ENCODE measurements at regions of chr1 and their contacts with region 1.

Region 1: DNA sequence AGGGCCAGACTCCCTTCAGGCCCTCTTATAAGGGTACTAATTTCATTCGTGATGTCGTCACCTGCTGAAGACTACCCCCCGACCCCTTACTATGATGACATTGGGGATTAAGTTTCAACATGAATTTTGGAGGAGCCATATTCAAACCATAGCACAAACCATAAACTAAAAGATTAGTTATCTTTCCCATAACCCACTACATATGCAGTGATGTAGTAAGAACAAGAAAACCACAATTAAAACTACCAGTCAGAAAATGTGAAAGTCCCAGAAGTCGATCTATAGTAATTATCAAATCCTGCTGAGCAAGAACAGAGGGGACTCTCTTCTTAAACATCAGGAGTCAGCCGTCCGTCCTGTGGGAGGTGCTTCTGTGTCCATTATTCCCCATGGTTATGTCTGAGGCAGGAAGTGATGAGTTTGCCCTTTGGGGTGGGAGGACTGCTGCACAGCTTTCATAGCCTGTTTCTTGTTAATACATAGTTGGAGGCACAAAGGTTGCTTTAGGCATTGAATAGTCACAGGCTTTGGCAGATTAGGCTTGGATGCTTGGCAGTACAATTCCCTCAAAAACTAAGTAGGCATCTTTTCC is 35.9 kb upstream of the PTGFRN start:
- DNase-seq: peak; percentile 68
- H3K4me3 Mint-ChIP-seq: no peak overlapping the region
- H3K27ac Mint-ChIP-seq: peak overlapping the region; percentile 22
- H3K4me1 Mint-ChIP-seq: peaks cover 19% of the 10 kb centered on the region
- H3K27me3 Mint-ChIP-seq: no peaks in the 10 kb centered on the region

Region 2: DNA sequence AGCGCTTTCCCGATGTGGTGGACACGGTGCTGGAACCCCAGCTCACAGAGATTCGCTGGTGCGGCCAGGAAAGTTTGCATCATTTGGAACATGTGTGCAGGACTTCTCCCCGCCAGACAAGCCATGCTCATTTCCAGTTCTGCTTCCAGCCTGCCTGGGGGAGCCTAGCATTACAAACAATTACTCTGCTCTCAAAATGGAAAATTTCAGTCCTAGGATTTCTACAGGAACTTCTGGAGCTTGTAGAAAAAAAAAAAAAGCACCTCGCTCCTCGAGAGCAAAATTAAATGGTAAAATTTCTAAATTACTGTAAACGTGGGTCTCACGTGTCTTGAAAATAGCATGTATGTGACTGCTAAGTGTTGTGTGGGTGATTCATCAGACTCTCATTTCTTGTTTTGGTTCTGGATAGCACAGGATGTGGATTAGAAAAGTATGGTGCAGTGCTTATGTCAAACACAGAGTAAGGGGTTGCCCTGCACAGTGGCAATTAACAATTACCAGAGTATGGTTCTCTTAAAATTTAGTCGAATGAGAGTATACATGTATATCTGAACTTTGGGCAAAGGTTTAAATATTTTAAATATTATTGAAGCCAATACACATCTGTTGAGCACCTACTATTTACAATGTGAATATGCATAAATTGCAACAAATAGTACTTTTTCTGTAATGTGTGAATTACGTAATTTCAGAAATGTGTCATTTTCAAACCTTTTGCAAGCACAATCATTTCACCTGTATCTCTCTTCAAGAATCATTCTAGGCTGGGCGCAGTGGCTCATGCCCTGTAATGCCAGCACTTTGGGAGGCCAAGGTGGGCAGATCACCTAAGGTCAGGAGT is 25.9 kb before region 1 on chr1:
- intact Hi-C with region 1: loop called (anchors 1 kb)
- DNase-seq: peak; percentile 71
- H3K4me3 Mint-ChIP-seq: peak overlapping the region; percentile 44
- H3K27ac Mint-ChIP-seq: peak overlapping the region; percentile 61
- H3K4me1 Mint-ChIP-seq: peaks cover 23% of the 10 kb centered on the region
- H3K27me3 Mint-ChIP-seq: no peaks in the 10 kb centered on the region

Region 3: DNA sequence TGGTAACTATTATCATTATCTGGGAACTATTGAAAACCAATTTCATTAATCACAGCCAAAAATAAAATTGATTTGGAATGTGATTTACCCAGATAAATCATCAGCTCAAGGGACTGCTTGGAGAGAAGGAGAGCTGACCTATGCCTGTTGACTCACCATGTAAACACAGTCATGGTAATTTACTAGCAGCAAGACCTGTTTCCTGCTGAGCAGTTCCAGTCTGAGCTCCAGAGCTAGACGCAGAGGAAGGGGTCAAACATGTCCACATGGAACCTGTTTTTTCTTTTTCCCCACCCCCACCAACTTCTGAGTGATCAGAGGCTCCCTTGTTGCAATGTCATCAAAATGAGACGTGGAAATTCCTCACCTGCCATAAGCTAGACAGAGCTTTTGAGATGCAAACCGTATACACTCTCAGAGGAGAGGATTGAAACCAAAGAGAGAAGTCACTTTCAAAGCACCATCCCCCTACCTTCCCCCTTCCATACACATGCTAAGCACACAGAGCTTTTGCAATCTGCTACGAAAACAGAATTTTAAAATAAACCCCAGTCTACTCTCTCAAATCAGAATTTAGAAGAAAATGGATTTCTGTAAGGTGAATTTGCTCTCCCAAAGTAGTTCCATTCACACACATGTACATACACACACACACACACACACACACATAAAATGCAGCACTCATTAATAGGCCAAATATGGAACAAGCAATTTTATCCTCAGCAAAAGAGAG is 19.9 kb before region 1 on chr1:
- intact Hi-C with region 1: loop called (anchors 1 kb)
- DNase-seq: no peak
- H3K4me3 Mint-ChIP-seq: peak overlapping the region; percentile 21
- H3K27ac Mint-ChIP-seq: peak overlapping the region; percentile 65
- H3K4me1 Mint-ChIP-seq: peaks cover 21% of the 10 kb centered on the region
- H3K27me3 Mint-ChIP-seq: no peaks in the 10 kb centered on the region

Region 4: GRCh38 chr1:116886291-116886878 is 12.6 kb after region 1 on chr1:
- intact Hi-C with region 1: no loop called
- DNase-seq: no peak
- H3K4me3 Mint-ChIP-seq: no peak overlapping the region
- H3K27ac Mint-ChIP-seq: no peak overlapping the region
- H3K4me1 Mint-ChIP-seq: peaks cover 28% of the 10 kb centered on the region
- H3K27me3 Mint-ChIP-seq: no peaks in the 10 kb centered on the region

Region 5: DNA sequence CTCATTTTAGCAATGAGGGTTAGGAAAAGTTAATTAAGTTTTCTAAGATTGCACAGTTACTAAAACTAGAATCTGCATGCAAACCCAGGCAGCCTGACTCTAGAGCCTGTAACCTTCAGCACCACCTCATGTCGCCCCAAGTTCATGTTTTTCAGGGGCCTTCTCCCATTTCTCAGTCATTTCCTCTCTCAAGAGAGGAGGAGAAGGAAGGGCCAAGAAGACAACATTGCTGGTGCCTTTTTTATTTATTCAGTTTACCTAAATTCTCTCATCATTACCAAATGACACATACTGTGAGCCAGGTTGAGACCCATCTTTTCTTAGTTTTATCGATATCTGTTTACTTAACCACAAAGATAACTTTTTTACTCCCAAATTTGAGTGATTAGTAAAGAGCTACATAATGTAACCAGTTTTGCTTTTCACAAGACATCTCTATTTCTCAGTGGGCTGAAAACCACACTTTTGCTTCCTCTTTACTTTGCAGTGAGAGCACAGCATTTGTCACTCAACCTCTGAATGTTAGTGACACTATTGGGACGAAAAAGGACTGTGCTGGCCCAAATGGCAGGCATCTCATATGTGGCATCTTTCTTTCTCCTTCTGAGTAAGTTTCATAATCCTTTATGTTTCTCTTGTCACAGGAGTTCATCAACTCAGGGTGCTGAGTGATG is 127.6 kb after region 1 on chr1 and contains the start of gene CD101:
- intact Hi-C with region 1: loop called (anchors 5 kb)
- DNase-seq: peak; percentile 70
- H3K4me3 Mint-ChIP-seq: peak within 1 kb of the TSS; percentile 11
- H3K27ac Mint-ChIP-seq: peak within 1 kb of the TSS; percentile 66
- H3K4me1 Mint-ChIP-seq: peaks cover 29% of the 10 kb centered on the region
- H3K27me3 Mint-ChIP-seq: peaks cover under 1% of the 10 kb centered on the region
- total RNA-seq, gene CD101: 0.82 and 1.2 TPM in 2 replicates